ENCODE measurements at regions of chr3 and their contacts with region 1.

Region 1: GRCh38 chr3:16290007-16290826 is 25.2 kb downstream of the OXNAD1 start:
- DNase-seq: peak in 29 of 35 experiments; percentile 28 to 79 (median 51)
- ATAC-seq: peak in 1 of 4 experiments; percentile 14
- H3K4me3 ChIP-seq: peak overlapping the region; percentile 59 to 85
- H3K4me3 Mint-ChIP-seq: peak overlapping the region; percentile 91 to 98 (median 97)
- H3K27ac ChIP-seq: peak overlapping the region; percentile 81
- H3K27ac Mint-ChIP-seq: peak overlapping the region; percentile 98 to 99
- H3K4me1 ChIP-seq: peaks cover 47% of the 10 kb centered on the region in 2 experiments
- H3K4me1 Mint-ChIP-seq: peaks cover 74 to 82% (median 79%) of the 10 kb centered on the region in 3 donors
- H3K27me3 ChIP-seq: no peaks in the 10 kb centered on the region
- H3K27me3 Mint-ChIP-seq: no peaks in the 10 kb centered on the region

Region 2: DNA sequence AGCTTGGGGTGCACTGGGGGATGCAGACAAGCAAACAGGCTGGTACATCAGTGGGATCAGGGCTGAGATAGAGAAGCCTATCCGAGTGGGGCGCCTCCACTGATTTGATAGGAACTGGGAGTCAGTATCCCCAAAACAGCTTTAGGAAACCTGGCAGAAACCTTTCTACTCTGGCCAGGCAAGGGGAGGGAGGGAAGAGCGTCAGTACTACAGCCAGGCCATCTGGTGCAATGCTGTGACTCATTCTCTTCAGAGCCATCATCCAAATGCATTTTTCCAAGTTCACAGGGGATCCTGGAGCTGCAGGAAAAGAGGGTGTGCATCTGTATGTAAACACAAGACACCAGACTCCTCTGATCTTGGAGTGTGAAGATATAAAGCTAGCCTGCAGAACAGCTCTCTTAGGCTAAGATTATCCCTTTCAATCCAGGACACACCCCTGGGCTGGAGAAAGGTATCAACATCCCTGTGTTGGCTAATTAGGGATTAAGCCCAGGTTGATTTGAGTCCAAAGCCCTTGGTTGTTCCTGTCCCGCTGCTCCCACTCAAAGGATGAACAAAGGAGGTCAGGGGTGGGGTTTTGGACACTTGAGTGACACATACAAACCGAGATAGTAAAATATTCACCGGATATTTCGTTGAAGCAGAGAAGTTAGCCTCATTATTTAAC is 106.5 kb before region 1 on chr3:
- CTCF ChIA-PET with region 1: no interaction called
- POLR2A ChIA-PET with region 1: no interaction called
- DNase-seq: no peak
- ATAC-seq: no peak
- H3K4me3 ChIP-seq: no peak overlapping the region
- H3K4me3 Mint-ChIP-seq: no peak overlapping the region
- H3K27ac ChIP-seq: no peak overlapping the region
- H3K27ac Mint-ChIP-seq: no peak overlapping the region
- H3K4me1 ChIP-seq: no peaks in the 10 kb centered on the region
- H3K4me1 Mint-ChIP-seq: peaks cover 1 to 2% (median 2%) of the 10 kb centered on the region in 3 donors
- H3K27me3 ChIP-seq: peaks cover 0 to 6% of the 10 kb centered on the region in 2 experiments
- H3K27me3 Mint-ChIP-seq: peaks cover 2 to 7% of the 10 kb centered on the region in 2 donors

Region 3: DNA sequence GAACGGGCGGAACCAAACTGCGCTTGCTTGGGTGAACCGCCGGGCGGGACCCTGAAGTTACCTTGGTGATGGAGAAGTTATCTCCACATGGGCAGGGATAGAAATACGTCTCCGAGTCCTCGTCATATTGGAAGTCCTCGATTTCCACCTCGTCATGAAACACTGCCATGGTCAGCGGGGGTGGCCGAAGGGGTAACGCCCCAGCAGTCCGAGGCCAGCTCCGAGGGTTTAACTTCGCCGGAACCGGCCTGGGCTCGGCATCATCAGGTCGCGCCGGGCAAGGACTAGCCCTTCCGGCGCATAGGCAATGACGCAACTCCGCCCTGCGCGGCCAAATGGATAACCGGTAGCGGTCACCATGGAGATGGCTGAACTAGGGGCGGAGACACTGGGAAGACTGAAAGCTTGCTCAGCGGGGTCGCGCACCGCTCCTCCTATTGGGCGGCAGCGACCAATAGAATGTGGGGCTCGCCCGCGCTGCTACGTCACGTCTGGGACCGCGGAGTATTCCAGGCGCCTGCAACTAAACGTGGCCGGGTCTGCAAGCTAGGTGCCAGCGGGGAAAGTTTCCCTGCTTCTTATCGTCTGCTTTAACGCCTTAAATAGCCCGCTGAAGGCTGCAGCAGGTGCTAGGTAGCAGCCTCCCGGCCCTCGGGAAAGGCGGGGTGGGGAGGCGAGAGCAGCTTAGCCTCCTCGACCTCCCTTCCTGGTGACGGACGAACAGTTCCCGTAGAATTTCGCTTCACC is 25.3 kb before region 1 on chr3 and contains the starts of genes DPH3 and OXNAD1:
- CTCF ChIA-PET with region 1: interaction called, 12 to 120 read pairs
- POLR2A ChIA-PET with region 1: interaction called, 6 to 31 read pairs
- DNase-seq: peak; percentile 95 to 100 (median 98)
- ATAC-seq: peak; percentile 96 to 98 (median 97)
- H3K4me3 ChIP-seq: peak within 1 kb of the TSS; percentile 84 to 93
- H3K4me3 Mint-ChIP-seq: peak within 1 kb of the TSS; percentile 94 to 97 (median 95)
- H3K27ac ChIP-seq: peak within 1 kb of the TSS; percentile 84
- H3K27ac Mint-ChIP-seq: peak within 1 kb of the TSS; percentile 97 to 99
- H3K4me1 ChIP-seq: peaks cover 15 to 17% of the 10 kb centered on the region in 2 experiments
- H3K4me1 Mint-ChIP-seq: peaks cover 39 to 45% (median 44%) of the 10 kb centered on the region in 3 donors
- H3K27me3 ChIP-seq: no peaks in the 10 kb centered on the region
- H3K27me3 Mint-ChIP-seq: no peaks in the 10 kb centered on the region
- total RNA-seq, gene DPH3: 13.1 to 19.0 (median 14.4) TPM
- total RNA-seq, gene OXNAD1: 78.5 to 218 (median 101) TPM

Region 4: DNA sequence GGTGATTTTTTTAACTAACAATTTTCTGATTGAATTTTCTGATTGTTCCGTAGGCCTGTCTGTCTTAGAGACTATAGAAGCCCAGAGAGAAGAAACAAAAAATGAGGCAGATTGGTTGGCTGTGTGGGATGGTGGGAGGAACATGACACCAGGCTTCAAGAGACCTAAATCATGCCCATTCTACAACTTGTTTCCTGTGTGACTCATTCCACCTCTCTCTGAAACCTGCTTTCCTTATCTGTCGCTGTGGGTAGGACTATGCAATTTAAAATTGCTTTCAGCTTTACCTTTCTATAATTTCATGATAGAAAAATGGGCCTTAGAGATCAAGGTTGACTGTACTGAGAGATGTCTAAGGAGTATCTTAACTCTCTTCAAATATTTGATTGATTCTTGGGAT is 19.3 kb after region 1 on chr3:
- CTCF ChIA-PET with region 1: interaction called, 12 to 49 read pairs
- POLR2A ChIA-PET with region 1: interaction called, 8 to 13 read pairs
- DNase-seq: peak in 21 of 35 experiments; percentile 24 to 81 (median 42)
- ATAC-seq: peak; percentile 69 to 85 (median 84)
- H3K4me3 ChIP-seq: no peak overlapping the region
- H3K4me3 Mint-ChIP-seq: peak overlapping the region; percentile 74 to 88 (median 80)
- H3K27ac ChIP-seq: peak overlapping the region; percentile 77
- H3K27ac Mint-ChIP-seq: peak overlapping the region; percentile 98 to 99
- H3K4me1 ChIP-seq: peaks cover 72 to 88% of the 10 kb centered on the region in 2 experiments
- H3K4me1 Mint-ChIP-seq: peaks cover 92 to 93% (median 93%) of the 10 kb centered on the region in 3 donors
- H3K27me3 ChIP-seq: no peaks in the 10 kb centered on the region
- H3K27me3 Mint-ChIP-seq: no peaks in the 10 kb centered on the region

Region 5: GRCh38 chr3:16388850-16389441 is 98.7 kb after region 1 on chr3:
- CTCF ChIA-PET with region 1: interaction called in 1 of 2 experiments, 3 read pairs
- POLR2A ChIA-PET with region 1: interaction called in 1 of 2 experiments, 17 read pairs
- DNase-seq: no peak
- ATAC-seq: no peak
- H3K4me3 ChIP-seq: no peak overlapping the region
- H3K4me3 Mint-ChIP-seq: no peak overlapping the region
- H3K27ac ChIP-seq: no peak overlapping the region
- H3K27ac Mint-ChIP-seq: no peak overlapping the region
- H3K4me1 ChIP-seq: peaks cover 0 to 16% of the 10 kb centered on the region in 2 experiments
- H3K4me1 Mint-ChIP-seq: peaks cover 37 to 59% (median 54%) of the 10 kb centered on the region in 3 donors
- H3K27me3 ChIP-seq: no peaks in the 10 kb centered on the region
- H3K27me3 Mint-ChIP-seq: no peaks in the 10 kb centered on the region

Region 6: DNA sequence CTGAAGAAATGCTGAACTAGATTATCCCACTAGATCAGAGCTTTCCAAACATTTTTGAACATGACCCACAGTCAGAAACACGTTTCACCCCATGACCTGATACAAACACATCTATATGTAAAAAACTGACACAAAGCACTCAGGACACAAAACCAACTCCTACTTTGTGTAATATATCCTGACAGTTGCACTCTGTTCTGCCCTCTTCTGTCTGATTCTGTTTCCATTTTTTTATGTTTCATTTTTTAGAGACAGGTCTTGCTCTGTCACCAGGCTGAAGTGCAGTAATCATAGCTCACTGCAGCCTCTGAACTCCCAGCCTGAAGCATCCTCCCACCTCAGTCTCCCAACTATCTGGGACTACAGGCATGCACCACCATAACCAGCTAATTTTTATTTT is 239.0 kb after region 1 on chr3:
- CTCF ChIA-PET with region 1: interaction called, 3 to 17 read pairs
- POLR2A ChIA-PET with region 1: no interaction called
- DNase-seq: peak in 1 of 35 experiments; percentile 52
- ATAC-seq: peak; percentile 38 to 75 (median 57)
- H3K4me3 ChIP-seq: no peak overlapping the region
- H3K4me3 Mint-ChIP-seq: no peak overlapping the region
- H3K27ac ChIP-seq: no peak overlapping the region
- H3K27ac Mint-ChIP-seq: peak overlapping the region; percentile 53 to 76
- H3K4me1 ChIP-seq: no peaks in the 10 kb centered on the region
- H3K4me1 Mint-ChIP-seq: peaks cover 7 to 8% (median 7%) of the 10 kb centered on the region in 3 donors
- H3K27me3 ChIP-seq: no peaks in the 10 kb centered on the region
- H3K27me3 Mint-ChIP-seq: no peaks in the 10 kb centered on the region

Measured in T-cell (primary cell).